Motor neuron (in vitro differentiated cells): ENCODE measurements at regions of chr15 and their contacts with region 1.

Region 1: GRCh38 chr15:49421991-49422390 is 1.1 kb upstream of the FGF7 start:
- ATAC-seq: peak; percentile 33 to 65 (median 58)
- H3K4me3 ChIP-seq: no peak overlapping the region
- H3K27ac ChIP-seq: no peak overlapping the region
- H3K4me1 ChIP-seq: peaks cover 0 to 6% of the 10 kb centered on the region in 2 donors

Region 2: GRCh38 chr15:49235446-49236124 is 186.4 kb before region 1 on chr15:
- in situ Hi-C with region 1: loop called in 2 of 9 experiments (anchors 25 kb)
- ATAC-seq: peak; percentile 58 to 92 (median 81)
- H3K4me3 ChIP-seq: no peak overlapping the region
- H3K27ac ChIP-seq: no peak overlapping the region
- H3K4me1 ChIP-seq: peaks cover 0 to 5% of the 10 kb centered on the region in 2 donors

Region 3: GRCh38 chr15:49282366-49282765 is 139.6 kb before region 1 on chr15:
- in situ Hi-C with region 1: loop called in 1 of 9 experiments (anchors 25 kb)
- ATAC-seq: no peak
- H3K4me3 ChIP-seq: no peak overlapping the region
- H3K27ac ChIP-seq: no peak overlapping the region
- H3K4me1 ChIP-seq: no peaks in the 10 kb centered on the region